H1 (cell line): ENCODE measurements at regions of chr17 and their contacts with region 1.

Region 1: GRCh38 chr17:82030470-82031302 is 792 bp upstream of the RAC3 start:
- DNase-seq: peak; percentile 70 to 97
- H3K4me3 ChIP-seq: peak overlapping the region; percentile 54 to 80 (median 56)
- H3K27ac ChIP-seq: no peak overlapping the region
- H3K4me1 ChIP-seq: peaks cover 0 to 13% (median 2%) of the 10 kb centered on the region in 4 experiments; a peak in 5 of 7 replicates
- H3K27me3 ChIP-seq: no peaks in the 10 kb centered on the region
- CTCF ChIP-seq: peak; percentile 96 to 98 (median 97)
- EP300 ChIP-seq: no peak
- POLR2A ChIP-seq: 0 out of 3 replicates have a peak, but pooled peaks of 1 of the 2 experiments have one; percentile 38
- RAD21 ChIP-seq: peak; percentile 97

Region 2: GRCh38 chr17:82043507-82043906 is 12.8 kb after region 1 on chr17:
- CTCF ChIA-PET with region 1: interaction called, 28 read pairs
- POLR2A ChIA-PET with region 1: interaction called, 10 read pairs
- DNase-seq: peak in 1 of 2 experiments; percentile 57
- H3K4me3 ChIP-seq: no peak overlapping the region
- H3K27ac ChIP-seq: no peak overlapping the region
- H3K4me1 ChIP-seq: peaks cover 0 to 15% (median 7%) of the 10 kb centered on the region in 4 experiments; a peak in 4 of 7 replicates
- H3K27me3 ChIP-seq: peaks cover 0 to 4% (median 0%) of the 10 kb centered on the region in 4 experiments; a peak in 1 of 7 replicates
- CTCF ChIP-seq: no peak
- EP300 ChIP-seq: no peak
- POLR2A ChIP-seq: no peak
- RAD21 ChIP-seq: no peak

Region 3: GRCh38 chr17:82065638-82066303 is 35.1 kb after region 1 on chr17 and contains the start of gene DUS1L:
- CTCF ChIA-PET with region 1: interaction called, 21 read pairs
- POLR2A ChIA-PET with region 1: interaction called, 24 read pairs
- DNase-seq: peak in 1 of 2 experiments; percentile 85
- H3K4me3 ChIP-seq: peak within 1 kb of the TSS; percentile 53 to 93 (median 77)
- H3K27ac ChIP-seq: no peak within 1 kb of the TSS
- H3K4me1 ChIP-seq: peaks cover 0 to 10% (median 5%) of the 10 kb centered on the region in 4 experiments; a peak in 5 of 7 replicates
- H3K27me3 ChIP-seq: no peaks in the 10 kb centered on the region
- CTCF ChIP-seq: no peak
- EP300 ChIP-seq: peak; percentile 17 to 60; a peak in 2 of 3 replicates
- POLR2A ChIP-seq: no peak
- RAD21 ChIP-seq: no peak
- total RNA-seq, gene DUS1L: 68.0 and 69.1 TPM in 2 replicates

Region 4: DNA sequence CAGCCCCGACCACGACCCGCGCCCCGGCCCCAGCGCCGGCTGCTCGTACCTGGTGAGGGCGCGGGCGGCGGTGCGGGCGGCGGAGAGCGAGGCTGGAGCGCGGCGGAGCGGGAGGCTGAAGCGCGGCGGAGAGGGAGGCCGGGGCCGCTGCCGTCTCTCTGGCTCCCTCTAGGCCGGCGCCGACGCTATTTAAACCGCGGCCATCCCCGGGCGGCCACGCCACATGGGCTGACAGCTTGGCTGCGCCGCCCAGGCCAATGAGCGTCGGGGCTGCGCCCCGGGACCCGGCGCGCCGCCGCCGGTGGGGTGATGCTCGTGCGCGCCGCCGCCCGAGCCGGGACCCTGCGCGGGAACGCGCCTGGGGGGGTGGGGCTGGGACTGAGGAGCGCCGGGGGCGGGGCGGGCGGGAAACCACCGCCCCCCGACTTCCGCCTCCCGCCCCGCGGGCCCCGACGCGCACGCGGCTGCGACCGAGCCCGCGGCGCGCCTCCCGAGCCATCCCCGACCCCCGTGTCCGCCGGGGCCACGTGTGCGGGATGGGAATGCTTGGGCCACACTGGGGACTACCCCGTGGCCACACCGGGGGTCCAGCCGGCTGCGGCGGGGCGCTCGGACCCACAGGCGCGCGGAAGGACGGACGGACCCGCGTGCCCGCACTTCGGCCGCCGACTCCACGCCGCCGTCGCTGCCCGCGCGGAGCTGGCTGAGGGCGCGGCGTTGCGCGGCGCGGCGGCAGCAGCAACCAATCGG is 67.6 kb after region 1 on chr17 and contains the start of gene FASN:
- CTCF ChIA-PET with region 1: interaction called, 12 read pairs
- POLR2A ChIA-PET with region 1: interaction called, 12 read pairs
- DNase-seq: peak; percentile 81 to 89
- H3K4me3 ChIP-seq: peak within 1 kb of the TSS; percentile 62 to 94 (median 78)
- H3K27ac ChIP-seq: peak within 1 kb of the TSS; percentile 96
- H3K4me1 ChIP-seq: peaks cover 0 to 47% (median 38%) of the 10 kb centered on the region in 4 experiments; a peak in 6 of 7 replicates
- H3K27me3 ChIP-seq: no peaks in the 10 kb centered on the region
- CTCF ChIP-seq: peak in 2 of 3 experiments; percentile 40 to 48; a peak in 2 of 4 replicates
- EP300 ChIP-seq: no peak; a peak in 1 of 3 replicates
- POLR2A ChIP-seq: peak; percentile 86 to 92
- RAD21 ChIP-seq: peak in 1 of 2 experiments; percentile 20; a peak in 2 of 4 replicates
- total RNA-seq, gene FASN: 559 and 561 TPM in 2 replicates

Region 5: GRCh38 chr17:82153745-82154375 is 123.2 kb after region 1 on chr17:
- CTCF ChIA-PET with region 1: interaction called, 12 read pairs
- POLR2A ChIA-PET with region 1: no interaction called
- DNase-seq: peak; percentile 56 to 94
- H3K4me3 ChIP-seq: no peak overlapping the region
- H3K27ac ChIP-seq: no peak overlapping the region
- H3K4me1 ChIP-seq: no peaks in the 10 kb centered on the region
- H3K27me3 ChIP-seq: no peaks in the 10 kb centered on the region
- CTCF ChIP-seq: peak; percentile 95 to 99 (median 99)
- EP300 ChIP-seq: no peak
- POLR2A ChIP-seq: no peak
- RAD21 ChIP-seq: peak; percentile 98 to 100